ENCODE measurements at regions of chr1 and their contacts with region 1.

Region 1: DNA sequence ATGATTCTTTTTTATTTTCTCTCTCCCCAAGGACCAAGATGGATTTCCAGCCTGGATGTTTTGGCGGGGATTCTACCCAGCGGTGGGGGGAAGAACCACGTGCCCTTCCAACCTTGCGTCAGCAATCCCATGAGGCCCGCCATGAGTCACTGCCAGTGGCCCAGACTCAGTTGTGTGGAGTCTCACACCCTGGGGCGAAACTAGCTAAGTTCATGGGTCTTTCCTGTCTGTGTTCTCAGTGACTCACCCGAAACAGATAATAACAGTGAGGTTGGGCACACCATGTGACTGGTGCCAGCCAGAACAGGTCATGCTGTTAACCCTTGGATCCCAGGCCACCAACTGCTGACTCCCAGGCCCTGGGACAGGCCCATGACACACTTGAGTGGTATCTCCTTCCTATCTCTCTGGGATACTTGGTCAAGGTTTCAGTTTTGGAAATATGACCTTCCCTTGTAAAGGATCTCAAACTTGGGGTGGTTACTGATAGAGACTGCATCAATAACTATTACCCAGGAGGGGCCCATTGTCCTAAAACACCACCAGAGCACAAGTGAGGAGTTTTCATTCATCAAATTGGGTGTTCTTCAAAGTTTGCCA is 98.0 kb upstream of the DUSP10 start:
- DNase-seq: peak; percentile 56 to 89 (median 60)
- H3K4me3 ChIP-seq: no peak overlapping the region
- H3K4me3 Mint-ChIP-seq: no peak overlapping the region
- H3K27ac ChIP-seq: no peak overlapping the region
- H3K27ac Mint-ChIP-seq: peak overlapping the region in 2 of 7 donors; percentile 31 to 85
- H3K4me1 ChIP-seq: peaks cover 24 to 26% of the 10 kb centered on the region in 2 donors
- H3K4me1 Mint-ChIP-seq: peaks cover 38% of the 10 kb centered on the region
- H3K27me3 ChIP-seq: no peaks in the 10 kb centered on the region
- H3K27me3 Mint-ChIP-seq: peaks cover 0 to 3% (median 2%) of the 10 kb centered on the region in 3 donors
- CTCF ChIP-seq: no peak

Region 2: GRCh38 chr1:221777431-221778072 is 62.3 kb before region 1 on chr1:
- intact Hi-C with region 1: loop called in 1 of 2 experiments (anchors 10 kb)
- DNase-seq: peak in 2 of 3 donors; percentile 43 to 55
- H3K4me3 ChIP-seq: peak overlapping the region in 1 of 3 experiments; percentile 42
- H3K4me3 Mint-ChIP-seq: no peak overlapping the region
- H3K27ac ChIP-seq: peak overlapping the region in 1 of 2 donors; percentile 63
- H3K27ac Mint-ChIP-seq: peak overlapping the region in 6 of 7 donors; percentile 64 to 89 (median 70)
- H3K4me1 ChIP-seq: peaks cover 64 to 67% of the 10 kb centered on the region in 2 donors
- H3K4me1 Mint-ChIP-seq: peaks cover 67% of the 10 kb centered on the region
- H3K27me3 ChIP-seq: no peaks in the 10 kb centered on the region
- H3K27me3 Mint-ChIP-seq: no peaks in the 10 kb centered on the region
- CTCF ChIP-seq: no peak